ENCODE measurements at regions of chr7 and their contacts with region 1.

Region 1: DNA sequence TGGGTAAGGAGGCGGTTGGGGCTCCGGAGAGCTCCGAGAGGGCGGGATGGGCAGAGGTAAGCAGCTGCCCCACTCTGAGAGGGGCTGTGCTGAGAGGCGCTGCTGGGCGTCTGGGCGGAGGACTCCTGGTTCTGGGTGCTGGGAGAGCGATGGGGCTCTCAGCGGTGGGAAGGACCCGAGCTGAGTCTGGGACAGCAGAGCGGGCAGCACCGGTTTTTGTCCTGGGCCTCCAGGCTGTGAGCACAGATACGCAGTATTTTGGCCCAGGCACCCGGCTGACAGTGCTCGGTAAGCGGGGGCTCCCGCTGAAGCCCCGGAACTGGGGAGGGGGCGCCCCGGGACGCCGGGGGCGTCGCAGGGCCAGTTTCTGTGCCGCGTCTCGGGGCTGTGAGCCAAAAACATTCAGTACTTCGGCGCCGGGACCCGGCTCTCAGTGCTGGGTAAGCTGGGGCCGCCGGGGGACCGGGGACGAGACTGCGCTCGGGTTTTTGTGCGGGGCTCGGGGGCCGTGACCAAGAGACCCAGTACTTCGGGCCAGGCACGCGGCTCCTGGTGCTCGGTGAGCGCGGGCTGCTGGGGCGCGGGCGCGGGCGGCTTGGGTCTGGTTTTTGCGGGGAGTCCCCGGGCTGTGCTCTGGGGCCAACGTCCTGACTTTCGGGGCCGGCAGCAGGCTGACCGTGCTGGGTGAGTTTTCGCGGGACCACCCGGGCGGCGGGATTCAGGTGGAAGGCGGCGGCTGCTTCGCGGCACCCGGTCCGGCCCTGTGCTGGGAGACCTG is 26.0 kb downstream of the PRSS2 start:
- DNase-seq: peak in 3 of 9 experiments; percentile 34 to 83 (median 35)
- ATAC-seq: peak; percentile 4
- H3K4me3 ChIP-seq: peak overlapping the region; percentile 81
- H3K4me3 Mint-ChIP-seq: peak overlapping the region; percentile 99
- H3K27ac ChIP-seq: peak overlapping the region; percentile 99
- H3K27ac Mint-ChIP-seq: peak overlapping the region; percentile 100
- H3K4me1 ChIP-seq: peaks cover 63% of the 10 kb centered on the region
- H3K4me1 Mint-ChIP-seq: peaks cover 70% of the 10 kb centered on the region
- H3K27me3 ChIP-seq: no peaks in the 10 kb centered on the region
- H3K27me3 Mint-ChIP-seq: no peaks in the 10 kb centered on the region
- CTCF ChIP-seq: no peak

Region 2: GRCh38 chr7:142313528-142313927 is 483.3 kb before region 1 on chr7:
- CTCF ChIA-PET with region 1: no interaction called
- POLR2A ChIA-PET with region 1: interaction called, 17 read pairs
- intact Hi-C with region 1: no loop called
- DNase-seq: peak in 8 of 9 experiments; percentile 18 to 73 (median 44)
- ATAC-seq: peak; percentile 89
- H3K4me3 ChIP-seq: peak overlapping the region in 1 of 2 experiments; percentile 20
- H3K4me3 Mint-ChIP-seq: peak overlapping the region; percentile 62
- H3K27ac ChIP-seq: no peak overlapping the region
- H3K27ac Mint-ChIP-seq: peak overlapping the region; percentile 38
- H3K4me1 ChIP-seq: peaks cover 20% of the 10 kb centered on the region
- H3K4me1 Mint-ChIP-seq: peaks cover 19% of the 10 kb centered on the region
- H3K27me3 ChIP-seq: no peaks in the 10 kb centered on the region
- H3K27me3 Mint-ChIP-seq: peaks cover 4% of the 10 kb centered on the region
- CTCF ChIP-seq: no peak

Region 3: DNA sequence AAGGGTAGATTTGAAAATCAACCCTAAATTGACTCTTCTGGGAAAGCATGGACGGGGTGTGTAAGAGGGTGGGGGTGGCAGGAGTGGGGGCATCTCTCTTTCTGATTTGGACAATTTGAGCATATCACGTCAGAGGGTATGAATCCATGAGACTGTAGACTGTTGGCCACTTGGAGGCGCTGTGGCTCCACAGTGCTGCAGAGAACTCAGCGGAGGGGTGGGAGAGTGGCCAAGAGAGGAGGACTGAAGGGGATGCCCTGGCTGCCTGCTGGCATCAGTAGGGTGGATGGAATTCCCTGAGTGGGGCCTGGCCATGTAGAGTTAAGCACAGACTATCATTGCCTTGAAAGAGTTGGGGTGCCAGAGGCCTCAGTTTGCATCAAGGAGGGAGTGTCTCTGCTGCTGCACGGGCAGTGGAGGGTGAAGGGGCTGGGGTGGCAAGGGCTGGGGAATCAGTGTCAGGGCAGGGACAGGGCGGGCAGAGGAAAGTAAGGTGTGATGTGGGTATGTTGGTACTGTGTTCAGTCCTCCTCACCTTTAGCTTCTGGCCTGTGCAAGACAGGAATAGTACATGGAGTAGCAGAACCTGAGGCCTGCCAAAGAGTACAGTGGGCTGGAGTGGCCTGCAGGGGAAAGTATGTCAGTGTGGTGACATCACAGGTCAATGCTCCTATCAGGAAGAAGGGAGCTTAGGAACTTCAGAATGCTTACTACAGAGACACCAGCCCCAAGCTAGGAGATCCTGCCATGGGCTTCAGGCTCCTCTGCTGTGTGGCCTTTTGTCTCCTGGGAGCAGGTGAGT is 405.4 kb before region 1 on chr7:
- CTCF ChIA-PET with region 1: no interaction called
- POLR2A ChIA-PET with region 1: interaction called, 13 read pairs
- intact Hi-C with region 1: no loop called
- DNase-seq: peak in 6 of 9 experiments; percentile 31 to 63 (median 49)
- ATAC-seq: peak; percentile 77
- H3K4me3 ChIP-seq: no peak overlapping the region
- H3K4me3 Mint-ChIP-seq: peak overlapping the region; percentile 46
- H3K27ac ChIP-seq: no peak overlapping the region
- H3K27ac Mint-ChIP-seq: no peak overlapping the region
- H3K4me1 ChIP-seq: no peaks in the 10 kb centered on the region
- H3K4me1 Mint-ChIP-seq: no peaks in the 10 kb centered on the region
- H3K27me3 ChIP-seq: no peaks in the 10 kb centered on the region
- H3K27me3 Mint-ChIP-seq: no peaks in the 10 kb centered on the region
- CTCF ChIP-seq: peak; percentile 22

Region 4: DNA sequence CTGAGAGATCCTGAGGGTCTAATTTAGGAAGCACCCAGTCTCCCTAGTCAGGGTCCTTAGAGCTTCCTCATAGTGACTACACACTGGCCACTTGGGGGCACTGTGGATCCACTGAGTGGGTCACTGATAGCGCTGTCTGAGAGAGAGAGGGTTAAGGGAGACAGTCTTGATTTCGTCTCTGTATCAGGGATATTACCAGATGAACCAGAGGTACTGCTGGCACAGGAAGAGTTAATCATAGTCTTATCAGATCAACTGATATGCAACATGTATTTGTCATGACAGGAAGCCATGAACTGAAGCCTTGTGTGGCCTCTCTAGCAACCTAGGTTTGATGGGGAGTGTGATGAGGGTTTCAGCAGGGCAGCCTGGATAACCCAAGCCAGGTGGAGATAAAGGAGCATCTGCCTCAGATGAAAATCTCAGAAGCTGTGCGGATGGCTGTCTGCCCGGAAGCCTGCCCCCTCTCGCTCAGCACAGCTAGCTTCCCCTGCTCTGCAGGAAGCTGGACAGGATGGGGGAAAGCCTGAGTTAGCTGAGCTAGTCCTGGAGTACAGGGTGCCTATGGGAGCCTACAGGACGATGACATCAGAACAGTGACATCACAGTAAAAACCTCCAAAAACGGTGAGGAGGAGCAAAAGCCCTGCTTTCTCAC is 261.5 kb before region 1 on chr7:
- CTCF ChIA-PET with region 1: no interaction called
- POLR2A ChIA-PET with region 1: interaction called, 14 read pairs
- intact Hi-C with region 1: no loop called
- DNase-seq: peak; percentile 24 to 82 (median 68)
- ATAC-seq: peak; percentile 77
- H3K4me3 ChIP-seq: peak overlapping the region; percentile 20 to 22
- H3K4me3 Mint-ChIP-seq: peak overlapping the region; percentile 38
- H3K27ac ChIP-seq: peak overlapping the region; percentile 42 to 46
- H3K27ac Mint-ChIP-seq: peak overlapping the region; percentile 73
- H3K4me1 ChIP-seq: peaks cover 24% of the 10 kb centered on the region
- H3K4me1 Mint-ChIP-seq: peaks cover 29% of the 10 kb centered on the region
- H3K27me3 ChIP-seq: no peaks in the 10 kb centered on the region
- H3K27me3 Mint-ChIP-seq: no peaks in the 10 kb centered on the region
- CTCF ChIP-seq: no peak

Region 5: DNA sequence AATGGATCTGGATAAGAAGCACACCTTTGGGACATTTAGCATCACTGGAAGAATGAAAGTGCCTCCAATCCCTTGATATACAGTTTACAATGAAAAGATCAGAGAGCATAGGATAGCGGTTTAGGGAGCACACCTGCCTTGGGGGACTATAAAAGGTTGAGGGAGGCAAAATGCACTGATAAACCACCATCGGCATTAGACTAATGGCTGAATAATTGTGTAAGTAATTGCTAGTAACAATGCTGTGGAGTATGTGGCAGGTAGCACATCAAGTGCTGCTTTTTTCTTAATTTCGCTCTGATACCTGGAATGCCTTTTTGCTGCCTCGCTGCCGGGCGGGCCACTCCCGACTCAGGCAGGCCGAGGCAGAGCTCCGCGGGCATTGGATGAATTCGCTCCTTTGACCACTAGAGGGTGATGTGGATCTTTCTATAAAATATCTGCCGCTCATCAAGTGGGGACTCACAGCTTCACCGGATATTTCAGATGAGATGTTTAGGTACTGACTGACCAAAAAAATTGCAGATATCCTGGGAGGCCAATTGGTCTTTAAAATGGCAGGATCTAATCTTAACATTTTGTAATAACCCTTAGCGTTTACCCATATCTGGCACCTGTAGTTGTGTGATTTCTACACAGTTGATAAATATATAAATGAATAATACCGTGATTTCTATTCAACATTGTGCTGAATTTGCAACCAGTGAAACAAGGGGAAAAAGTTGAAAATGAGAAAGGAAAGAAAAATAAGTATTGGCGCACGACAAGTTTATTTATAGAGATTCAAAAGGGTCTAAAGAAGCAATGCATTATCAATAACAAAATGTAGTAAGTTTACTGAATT is 164.3 kb before region 1 on chr7:
- CTCF ChIA-PET with region 1: interaction called, 3 read pairs
- POLR2A ChIA-PET with region 1: interaction called, 25 read pairs
- intact Hi-C with region 1: no loop called
- DNase-seq: peak; percentile 10 to 82 (median 49)
- ATAC-seq: peak; percentile 51
- H3K4me3 ChIP-seq: no peak overlapping the region
- H3K4me3 Mint-ChIP-seq: no peak overlapping the region
- H3K27ac ChIP-seq: no peak overlapping the region
- H3K27ac Mint-ChIP-seq: peak overlapping the region; percentile 18
- H3K4me1 ChIP-seq: no peaks in the 10 kb centered on the region
- H3K4me1 Mint-ChIP-seq: peaks cover 13% of the 10 kb centered on the region
- H3K27me3 ChIP-seq: no peaks in the 10 kb centered on the region
- H3K27me3 Mint-ChIP-seq: peaks cover 2% of the 10 kb centered on the region
- CTCF ChIP-seq: peak; percentile 58

Region 6: DNA sequence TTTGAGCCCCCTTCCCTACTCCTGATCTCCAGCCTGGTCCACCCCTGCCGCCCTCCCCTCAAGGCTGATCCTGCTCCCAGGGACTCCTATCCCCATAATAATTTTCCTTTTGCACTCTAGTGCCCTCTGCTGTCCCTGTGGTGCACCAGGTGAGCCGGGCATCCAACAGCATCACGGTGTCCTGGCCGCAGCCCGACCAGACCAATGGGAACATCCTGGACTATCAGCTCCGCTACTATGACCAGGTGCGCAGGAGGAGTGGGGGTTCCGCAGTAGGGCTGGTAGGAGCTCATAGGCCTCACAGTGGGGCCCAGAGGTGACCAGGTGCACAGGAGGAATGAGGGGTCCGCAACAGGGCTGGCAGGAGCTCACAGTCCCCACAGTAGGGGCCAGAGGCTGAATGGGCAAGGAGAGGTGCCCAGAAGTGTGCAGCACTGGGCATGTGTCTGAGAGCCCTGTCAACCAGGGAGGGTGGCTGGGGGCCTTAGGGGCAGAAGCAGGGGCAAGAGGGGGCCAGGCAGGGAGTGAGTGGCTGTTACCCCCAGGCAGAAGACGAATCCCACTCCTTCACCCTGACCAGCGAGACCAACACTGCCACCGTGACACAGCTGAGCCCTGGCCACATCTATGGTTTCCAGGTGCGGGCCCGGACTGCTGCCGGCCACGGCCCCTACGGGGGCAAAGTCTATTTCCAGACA is 69.7 kb after region 1 on chr7:
- CTCF ChIA-PET with region 1: no interaction called
- POLR2A ChIA-PET with region 1: no interaction called
- intact Hi-C with region 1: no loop called
- DNase-seq: peak in 2 of 9 experiments; percentile 35 to 40
- ATAC-seq: no peak
- H3K4me3 ChIP-seq: no peak overlapping the region
- H3K4me3 Mint-ChIP-seq: no peak overlapping the region
- H3K27ac ChIP-seq: no peak overlapping the region
- H3K27ac Mint-ChIP-seq: no peak overlapping the region
- H3K4me1 ChIP-seq: no peaks in the 10 kb centered on the region
- H3K4me1 Mint-ChIP-seq: no peaks in the 10 kb centered on the region
- H3K27me3 ChIP-seq: no peaks in the 10 kb centered on the region
- H3K27me3 Mint-ChIP-seq: no peaks in the 10 kb centered on the region
- CTCF ChIP-seq: no peak

Measured in CD8-positive, alpha-beta T cell (primary cell).